ENCODE measurements at regions of chr15 and their contacts with region 1.

Region 1: DNA sequence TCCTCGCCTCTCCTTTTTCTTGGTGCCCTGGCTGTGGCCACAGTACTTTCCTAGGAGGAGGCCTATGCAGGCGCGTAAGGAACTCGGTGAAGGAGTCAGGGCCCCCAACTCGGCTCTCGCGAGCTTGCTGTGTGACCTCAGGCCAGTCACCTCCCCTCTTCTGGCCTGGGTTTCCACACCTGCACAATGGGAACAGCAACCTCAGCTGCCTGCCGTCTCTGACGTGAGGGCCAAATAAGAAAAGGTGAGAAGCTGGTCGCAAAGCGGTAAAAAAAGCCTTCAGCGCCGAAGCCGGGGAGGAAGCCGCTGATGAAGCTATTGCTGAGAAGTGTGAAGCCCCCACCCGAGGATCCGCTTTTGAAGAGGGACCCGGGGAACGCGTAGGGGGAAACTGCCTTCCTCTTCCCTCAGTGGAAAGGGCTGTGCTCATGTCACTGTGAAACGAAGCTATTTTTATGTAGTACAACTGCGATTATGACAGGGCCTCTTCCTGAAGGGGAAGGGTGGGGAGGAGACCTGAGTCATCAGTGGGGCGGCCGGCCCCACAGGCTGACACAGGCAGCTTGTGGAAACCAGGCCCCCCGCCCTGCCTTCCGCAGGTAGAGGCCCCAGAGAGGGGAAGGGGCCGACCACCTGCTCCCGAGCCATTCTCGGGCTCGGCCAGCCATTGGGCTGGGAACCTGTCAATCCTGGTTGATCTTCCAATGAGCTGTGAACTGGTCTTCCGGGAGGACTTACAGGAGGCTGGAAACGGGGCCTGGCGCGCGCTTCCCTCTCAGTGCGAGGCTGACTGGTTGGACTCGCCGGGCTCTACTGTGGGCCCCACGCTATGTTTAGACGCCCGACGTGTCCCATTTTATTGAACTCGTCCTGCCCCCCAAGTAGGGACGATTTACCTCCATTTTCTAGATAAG is 18.0 kb upstream of the ANKDD1A start:
- DNase-seq: peak; percentile 94 to 98 (median 96)
- H3K4me3 ChIP-seq: peak overlapping the region; percentile 53 to 59
- H3K4me3 Mint-ChIP-seq: peak overlapping the region; percentile 84 to 93 (median 86)
- H3K27ac ChIP-seq: peak overlapping the region; percentile 89
- H3K27ac Mint-ChIP-seq: peak overlapping the region; percentile 95 to 99 (median 98)
- H3K4me1 ChIP-seq: peaks cover 74% of the 10 kb centered on the region
- H3K4me1 Mint-ChIP-seq: peaks cover 53 to 73% (median 64%) of the 10 kb centered on the region in 4 donors
- H3K27me3 ChIP-seq: no peaks in the 10 kb centered on the region
- H3K27me3 Mint-ChIP-seq: no peaks in the 10 kb centered on the region

Region 2: GRCh38 chr15:64430000-64430735 is 463.6 kb before region 1 on chr15:
- CTCF ChIA-PET with region 1: no interaction called
- POLR2A ChIA-PET with region 1: interaction called, 4 read pairs
- intact Hi-C with region 1: loop called (anchors 5 kb)
- DNase-seq: peak; percentile 75 to 85 (median 79)
- H3K4me3 ChIP-seq: peak overlapping the region; percentile 18 to 25
- H3K4me3 Mint-ChIP-seq: peak overlapping the region; percentile 56 to 79 (median 76)
- H3K27ac ChIP-seq: peak overlapping the region; percentile 44
- H3K27ac Mint-ChIP-seq: peak overlapping the region; percentile 87 to 97 (median 91)
- H3K4me1 ChIP-seq: peaks cover 47% of the 10 kb centered on the region
- H3K4me1 Mint-ChIP-seq: peaks cover 31 to 49% (median 45%) of the 10 kb centered on the region in 4 donors
- H3K27me3 ChIP-seq: no peaks in the 10 kb centered on the region
- H3K27me3 Mint-ChIP-seq: no peaks in the 10 kb centered on the region

Region 3: DNA sequence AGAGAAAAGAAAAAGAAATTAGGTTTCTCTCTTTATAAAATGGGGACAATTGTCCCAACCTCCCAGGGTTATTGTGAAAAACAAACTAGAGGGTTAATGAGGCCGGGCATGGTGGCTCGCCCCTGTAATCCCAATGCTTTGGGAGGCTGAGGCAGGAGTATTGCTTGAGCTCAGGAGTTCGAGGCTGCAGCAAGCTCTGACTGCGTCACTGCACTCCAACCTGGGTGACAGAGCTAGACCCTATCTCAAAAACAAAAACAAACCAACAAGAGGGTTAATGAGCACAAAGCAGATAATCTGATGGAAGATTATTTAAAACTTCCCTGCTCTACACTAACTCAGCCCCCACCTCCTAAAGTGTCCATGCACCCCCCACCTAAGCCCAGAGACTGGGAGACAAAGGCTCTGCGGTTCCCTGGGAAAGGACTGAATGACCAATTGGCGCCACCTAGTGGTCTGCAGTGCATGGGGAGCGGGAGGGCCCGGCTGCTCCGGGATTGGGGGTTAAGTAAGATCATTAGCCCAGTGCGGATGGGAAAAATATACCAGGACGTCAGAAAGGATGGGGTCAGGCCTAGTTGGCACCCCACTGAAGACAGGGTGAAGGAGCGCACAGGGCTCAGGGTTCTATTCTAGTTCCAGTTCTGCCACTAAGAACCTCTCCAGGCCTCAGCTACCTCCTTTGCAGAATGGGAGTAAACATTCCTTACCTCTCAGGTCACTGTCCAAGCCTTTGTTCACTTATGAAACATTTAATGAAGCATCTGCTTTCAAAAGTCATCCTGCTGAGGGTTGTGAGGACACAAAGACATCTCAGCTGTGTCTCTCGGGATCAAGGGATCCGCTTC is 83.9 kb before region 1 on chr15:
- CTCF ChIA-PET with region 1: interaction called, 25 read pairs
- POLR2A ChIA-PET with region 1: interaction called, 10 read pairs
- intact Hi-C with region 1: no loop called
- DNase-seq: peak; percentile 42 to 58 (median 54)
- H3K4me3 ChIP-seq: no peak overlapping the region
- H3K4me3 Mint-ChIP-seq: no peak overlapping the region
- H3K27ac ChIP-seq: no peak overlapping the region
- H3K27ac Mint-ChIP-seq: peak overlapping the region in 3 of 7 donors; percentile 18 to 68 (median 43)
- H3K4me1 ChIP-seq: peaks cover 5% of the 10 kb centered on the region
- H3K4me1 Mint-ChIP-seq: peaks cover 0 to 5% (median 2%) of the 10 kb centered on the region in 4 donors
- H3K27me3 ChIP-seq: no peaks in the 10 kb centered on the region
- H3K27me3 Mint-ChIP-seq: no peaks in the 10 kb centered on the region

Region 4: GRCh38 chr15:64841258-64842095 is 52.3 kb before region 1 on chr15 and contains the start of gene PLEKHO2:
- CTCF ChIA-PET with region 1: interaction called, 162 read pairs
- POLR2A ChIA-PET with region 1: interaction called, 331 read pairs
- intact Hi-C with region 1: loop called (anchors 1 kb)
- DNase-seq: peak; percentile 83 to 95 (median 87)
- H3K4me3 ChIP-seq: peak within 1 kb of the TSS; percentile 81 to 88
- H3K4me3 Mint-ChIP-seq: peak within 1 kb of the TSS; percentile 85 to 99 (median 98)
- H3K27ac ChIP-seq: peak within 1 kb of the TSS; percentile 84
- H3K27ac Mint-ChIP-seq: peak within 1 kb of the TSS; percentile 78 to 99 (median 97)
- H3K4me1 ChIP-seq: peaks cover 90% of the 10 kb centered on the region
- H3K4me1 Mint-ChIP-seq: peaks cover 55 to 86% (median 70%) of the 10 kb centered on the region in 4 donors
- H3K27me3 ChIP-seq: no peaks in the 10 kb centered on the region
- H3K27me3 Mint-ChIP-seq: no peaks in the 10 kb centered on the region
- total RNA-seq, gene PLEKHO2: 22.7 to 24.1 TPM

Region 5: DNA sequence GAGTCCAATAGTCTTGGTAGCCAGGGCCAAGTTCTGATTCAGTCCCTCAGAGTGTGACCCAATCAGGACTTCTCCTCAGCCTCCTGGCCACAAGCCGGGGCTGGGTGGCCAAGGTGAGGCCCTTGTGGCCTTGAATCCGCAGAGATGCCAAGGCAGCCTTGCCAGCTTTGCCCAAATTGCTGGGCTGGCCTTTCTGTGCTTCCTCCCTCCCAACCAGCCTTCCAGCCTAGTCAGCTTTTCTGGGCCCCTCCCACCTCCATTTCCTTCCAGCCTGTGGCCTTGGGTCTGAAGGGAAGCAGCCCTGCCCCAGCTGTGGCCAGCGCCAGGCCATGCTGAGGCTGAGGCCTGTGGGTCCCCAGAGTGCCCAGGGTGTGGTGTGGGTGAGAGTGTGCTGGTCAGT is 16.3 kb before region 1 on chr15:
- CTCF ChIA-PET with region 1: interaction called, 40 read pairs
- POLR2A ChIA-PET with region 1: interaction called, 188 read pairs
- intact Hi-C with region 1: no loop called
- DNase-seq: no peak
- H3K4me3 ChIP-seq: no peak overlapping the region
- H3K4me3 Mint-ChIP-seq: no peak overlapping the region
- H3K27ac ChIP-seq: no peak overlapping the region
- H3K27ac Mint-ChIP-seq: peak overlapping the region in 1 of 7 donors; percentile 68
- H3K4me1 ChIP-seq: peaks cover 35% of the 10 kb centered on the region
- H3K4me1 Mint-ChIP-seq: peaks cover 17 to 44% (median 32%) of the 10 kb centered on the region in 4 donors
- H3K27me3 ChIP-seq: no peaks in the 10 kb centered on the region
- H3K27me3 Mint-ChIP-seq: no peaks in the 10 kb centered on the region

Region 6: GRCh38 chr15:65304389-65305144 is 410.8 kb after region 1 on chr15 and contains the start of gene RNU5B-1:
- CTCF ChIA-PET with region 1: no interaction called
- POLR2A ChIA-PET with region 1: interaction called, 16 read pairs
- intact Hi-C with region 1: no loop called
- DNase-seq: peak; percentile 85 to 92 (median 91)
- H3K4me3 ChIP-seq: peak within 1 kb of the TSS; percentile 61 to 73
- H3K4me3 Mint-ChIP-seq: peak within 1 kb of the TSS; percentile 91 to 98 (median 95)
- H3K27ac ChIP-seq: peak within 1 kb of the TSS; percentile 92
- H3K27ac Mint-ChIP-seq: peak within 1 kb of the TSS; percentile 96 to 100 (median 99)
- H3K4me1 ChIP-seq: peaks cover 24% of the 10 kb centered on the region
- H3K4me1 Mint-ChIP-seq: peaks cover 19 to 34% (median 26%) of the 10 kb centered on the region in 4 donors
- H3K27me3 ChIP-seq: no peaks in the 10 kb centered on the region
- H3K27me3 Mint-ChIP-seq: no peaks in the 10 kb centered on the region
- total RNA-seq, gene RNU5B-1: 24.0 TPM in 1 of 2 experiments, not detected in the other